ENCODE measurements at regions of chr1 and their contacts with region 1.

Region 1: DNA sequence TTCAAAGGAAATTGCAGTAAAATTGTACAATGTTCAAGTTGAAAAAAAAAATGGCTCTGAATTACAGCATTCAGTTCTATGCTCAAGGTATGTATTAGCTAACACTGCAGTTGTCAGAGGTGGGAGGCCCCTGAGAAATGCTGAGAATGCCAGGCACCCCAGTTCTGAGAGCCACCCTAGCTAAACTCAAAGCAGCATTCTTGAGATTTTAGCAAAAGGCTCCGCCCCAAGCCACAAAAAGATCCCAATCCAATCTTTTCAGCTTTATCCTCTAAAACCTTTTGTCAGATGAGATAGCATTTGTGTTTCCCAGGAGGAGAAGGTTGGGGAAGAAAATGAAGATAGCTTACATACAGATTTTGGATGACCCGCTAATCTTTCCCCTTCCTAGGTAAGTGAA is 68.8 kb downstream of the SMYD2 start:
- DNase-seq: no peak
- H3K4me3 ChIP-seq: no peak overlapping the region
- H3K27ac ChIP-seq: no peak overlapping the region
- H3K4me1 ChIP-seq: no peaks in the 10 kb centered on the region
- H3K27me3 ChIP-seq: no peaks in the 10 kb centered on the region
- CTCF ChIP-seq: no peak

Region 2: DNA sequence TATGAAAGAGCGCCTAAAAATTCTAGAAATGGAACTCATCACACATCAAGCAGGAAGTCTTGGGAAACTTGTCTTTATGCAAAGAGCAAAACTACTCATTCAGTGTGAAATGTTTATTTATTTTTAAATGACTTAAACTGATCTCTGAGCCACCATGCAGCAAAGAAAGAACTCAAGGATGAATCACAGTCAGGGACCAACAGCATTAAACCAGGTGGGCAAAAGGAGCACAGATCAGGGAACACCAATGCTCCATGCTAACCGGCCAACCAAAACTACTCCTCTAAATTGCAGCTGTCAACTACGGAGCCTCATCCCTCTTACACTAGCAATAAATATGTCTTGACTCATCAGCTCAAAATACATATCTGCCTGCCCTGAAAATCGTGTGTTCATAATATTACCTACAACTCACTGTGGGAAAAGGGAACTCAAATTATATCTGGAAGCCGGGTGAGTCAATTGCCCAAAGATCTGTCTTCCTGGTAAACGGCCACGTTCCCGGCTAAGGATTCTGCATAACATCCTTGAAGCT is 72.4 kb after region 1 on chr1:
- CTCF ChIA-PET with region 1: no interaction called
- dilution Hi-C with region 1: loop called (anchors 5 kb)
- in situ Hi-C with region 1: no loop called
- intact Hi-C with region 1: no loop called
- DNase-seq: peak; percentile 88
- H3K4me3 ChIP-seq: peak overlapping the region in 1 of 3 experiments; percentile 14
- H3K27ac ChIP-seq: peak overlapping the region; percentile 92
- H3K4me1 ChIP-seq: peaks cover 86% of the 10 kb centered on the region
- H3K27me3 ChIP-seq: no peaks in the 10 kb centered on the region
- CTCF ChIP-seq: no peak

Region 3: DNA sequence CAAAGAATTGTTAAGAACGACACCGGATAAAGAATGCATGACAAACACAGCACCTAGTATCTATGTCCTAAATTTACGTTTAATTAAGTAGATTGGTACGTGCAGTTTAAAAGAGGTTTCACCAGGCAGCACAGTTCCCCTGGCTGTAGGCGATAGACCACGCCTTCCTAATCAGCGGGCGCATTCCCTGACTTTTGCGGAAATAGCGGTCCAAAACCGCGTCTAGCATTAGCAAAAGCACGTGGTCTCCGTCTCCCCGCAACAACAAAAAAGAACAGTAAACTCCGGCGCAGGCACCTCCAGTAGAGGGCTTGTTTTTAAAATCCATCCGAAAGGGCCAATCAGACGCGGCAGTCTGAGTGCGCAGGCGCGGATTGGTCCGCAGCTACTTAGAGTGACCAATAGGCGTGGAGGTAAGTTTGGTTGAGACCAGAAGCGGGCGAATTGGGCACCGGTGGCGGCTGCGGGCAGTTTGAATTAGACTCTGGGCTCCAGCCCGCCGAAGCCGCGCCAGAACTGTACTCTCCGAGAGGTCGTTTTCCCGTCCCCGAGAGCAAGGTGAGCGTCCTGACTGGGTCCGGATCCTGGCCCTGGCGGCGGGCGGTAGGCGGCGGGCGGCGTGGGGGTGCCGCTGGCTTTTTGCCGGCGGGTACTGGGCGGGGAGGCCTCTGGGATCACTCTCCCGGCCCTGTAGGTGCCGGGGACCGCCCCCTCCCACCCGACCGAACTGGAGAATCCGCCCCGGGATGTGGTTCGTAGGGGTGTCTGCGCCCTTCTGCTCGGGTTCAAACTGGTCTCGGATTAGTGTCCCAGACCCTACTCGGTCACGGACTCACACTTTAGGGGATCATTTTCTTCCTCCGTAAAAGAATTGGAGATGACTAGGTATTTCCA is 253.2 kb after region 1 on chr1 and contains the start of gene CENPF:
- CTCF ChIA-PET with region 1: no interaction called
- dilution Hi-C with region 1: loop called (anchors 10 kb)
- in situ Hi-C with region 1: no loop called
- intact Hi-C with region 1: no loop called
- DNase-seq: peak; percentile 99
- H3K4me3 ChIP-seq: peak within 1 kb of the TSS; percentile 68 to 75 (median 75)
- H3K27ac ChIP-seq: peak within 1 kb of the TSS; percentile 88
- H3K4me1 ChIP-seq: peaks cover 18% of the 10 kb centered on the region
- H3K27me3 ChIP-seq: no peaks in the 10 kb centered on the region
- CTCF ChIP-seq: peak in 1 of 2 donors; percentile 33
- total RNA-seq, gene CENPF: 1.7 to 52.4 TPM

Measured in mammary epithelial cell (primary cell).